Posterior vena cava (tissue), 2 donors: ENCODE measurements at regions of chr7 and their contacts with region 1.

Region 1: DNA sequence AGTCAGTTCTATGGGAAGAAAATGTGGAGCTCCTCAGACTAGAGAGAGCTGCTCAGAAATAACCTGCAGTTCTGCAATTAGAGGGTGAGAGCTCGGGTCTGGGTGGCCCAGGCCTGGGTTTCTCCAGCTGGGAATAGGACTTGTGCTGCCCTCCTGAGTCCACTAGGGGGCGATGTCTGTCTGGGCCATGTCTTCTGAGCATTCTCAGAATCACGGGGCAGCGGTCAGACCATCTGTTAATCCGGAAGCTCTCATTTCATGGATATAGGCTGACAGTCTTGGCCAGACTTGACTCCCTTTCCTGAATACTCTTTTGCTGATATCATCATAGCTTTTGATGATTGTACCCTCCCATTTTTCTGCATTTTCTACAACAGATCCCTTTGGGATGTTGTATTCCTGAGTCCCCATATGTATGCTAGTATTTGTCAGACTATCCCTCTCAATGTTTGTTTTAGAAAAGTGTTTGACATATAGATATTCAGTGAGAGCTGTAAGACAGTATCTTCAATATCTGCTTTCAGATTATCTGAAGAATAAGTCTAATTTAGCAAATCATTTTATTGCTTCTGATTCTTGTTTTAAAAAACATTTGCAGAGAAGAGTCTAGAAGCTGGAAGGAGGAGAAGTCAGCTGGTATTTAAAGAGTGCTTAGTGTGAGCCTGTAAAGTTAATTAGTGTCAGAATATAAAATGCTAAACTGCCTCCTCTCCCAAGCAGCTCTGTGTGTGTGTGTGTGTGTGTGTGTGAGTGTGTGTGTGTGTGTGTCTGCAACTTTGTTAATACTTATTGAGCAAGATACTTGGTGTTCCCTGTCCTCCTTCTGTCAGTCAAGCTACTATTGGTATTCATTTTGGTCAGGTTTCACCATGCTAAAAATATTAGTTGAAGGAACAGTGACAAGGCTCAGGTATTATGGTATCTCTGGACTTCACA is 38.0 kb downstream of the STARD3NL start:
- DNase-seq: peak; percentile 94

Region 2: GRCh38 chr7:36473454-36474282 is 1742.3 kb before region 1 on chr7:
- intact Hi-C with region 1: no loop called
- DNase-seq: no peak

Region 3: DNA sequence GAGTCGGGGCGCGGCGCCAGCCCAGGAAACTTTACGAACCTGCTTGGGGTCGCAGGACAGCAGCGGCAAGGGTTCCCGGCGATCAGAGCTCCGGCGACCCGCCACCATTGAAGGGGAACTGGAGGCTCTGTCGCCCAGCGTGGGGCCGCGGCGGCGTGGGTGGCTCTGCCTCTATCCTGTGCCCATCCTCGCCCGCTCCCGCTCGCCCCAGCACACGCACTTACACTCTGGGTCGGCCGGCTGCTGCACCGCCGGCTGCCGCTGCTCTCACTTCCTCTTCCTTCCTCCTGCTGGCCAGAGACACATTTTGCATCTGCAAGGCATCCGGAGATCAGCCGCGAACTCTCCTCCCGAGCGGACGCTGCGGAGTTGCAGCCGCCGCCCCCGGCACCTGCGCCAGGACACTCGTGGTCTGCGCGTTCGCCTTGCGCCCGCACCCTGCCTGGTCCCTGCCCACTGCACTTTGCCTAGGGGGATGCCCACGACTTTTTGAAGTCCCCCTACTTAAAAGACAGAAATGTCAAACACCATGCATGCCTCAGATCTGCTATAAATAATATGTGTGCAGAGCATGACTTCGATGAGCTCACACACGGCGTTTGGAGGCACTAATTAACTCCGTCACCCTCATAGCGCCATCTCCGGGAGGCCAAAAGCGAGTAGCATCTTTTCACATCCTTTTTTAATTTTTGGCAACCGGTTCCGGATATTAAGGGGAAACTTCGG is 767.2 kb before region 1 on chr7 and contains the start of gene ELMO1:
- intact Hi-C with region 1: loop called in 1 of 2 experiments (anchors 10 kb)
- DNase-seq: peak; percentile 94
- total RNA-seq, gene ELMO1: 32.2 to 46.7 TPM

Region 4: GRCh38 chr7:39386718-39387117 is 1170.7 kb after region 1 on chr7:
- intact Hi-C with region 1: loop called in 1 of 2 experiments (anchors 5 kb)
- DNase-seq: no peak